Activated CD4-positive, alpha-beta T cell treated with anti-CD3 and anti-CD28 coated beads for 36 hours (primary cell): ENCODE measurements at regions of chr4 and their contacts with region 1.

Region 1: DNA sequence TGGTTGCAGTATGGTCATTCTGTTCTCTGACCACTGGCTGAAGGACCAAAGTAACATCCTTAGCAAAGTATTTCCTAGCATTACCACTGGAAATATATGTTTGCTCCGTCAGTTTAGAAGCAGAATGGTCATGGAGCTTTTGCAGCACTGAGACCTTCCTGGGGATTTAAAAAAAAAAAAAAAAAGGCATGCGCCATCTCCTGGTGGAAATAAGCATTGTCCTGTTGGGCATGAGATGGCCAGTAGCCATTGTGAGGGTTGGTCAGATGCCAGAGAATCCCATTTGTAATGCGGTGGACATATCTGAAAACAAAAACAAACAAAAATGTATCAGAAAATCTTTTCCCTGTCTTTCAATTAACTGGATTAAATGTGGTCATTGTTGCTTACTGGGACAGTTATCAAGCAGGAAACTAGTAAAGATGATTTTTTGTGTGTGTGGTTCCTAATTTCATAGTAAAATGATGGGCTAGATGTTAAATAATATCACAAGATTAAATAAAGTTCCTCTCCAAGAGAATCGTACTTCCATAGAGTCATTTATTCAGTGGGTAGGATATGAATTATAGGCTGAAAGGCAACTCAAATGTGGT is 139.6 kb downstream of the SOWAHB start:
- DNase-seq: no peak
- ATAC-seq: no peak
- H3K4me3 Mint-ChIP-seq: no peak overlapping the region
- H3K27ac Mint-ChIP-seq: no peak overlapping the region
- H3K4me1 Mint-ChIP-seq: peaks cover 14% of the 10 kb centered on the region
- H3K27me3 Mint-ChIP-seq: peaks cover 11% of the 10 kb centered on the region

Region 2: DNA sequence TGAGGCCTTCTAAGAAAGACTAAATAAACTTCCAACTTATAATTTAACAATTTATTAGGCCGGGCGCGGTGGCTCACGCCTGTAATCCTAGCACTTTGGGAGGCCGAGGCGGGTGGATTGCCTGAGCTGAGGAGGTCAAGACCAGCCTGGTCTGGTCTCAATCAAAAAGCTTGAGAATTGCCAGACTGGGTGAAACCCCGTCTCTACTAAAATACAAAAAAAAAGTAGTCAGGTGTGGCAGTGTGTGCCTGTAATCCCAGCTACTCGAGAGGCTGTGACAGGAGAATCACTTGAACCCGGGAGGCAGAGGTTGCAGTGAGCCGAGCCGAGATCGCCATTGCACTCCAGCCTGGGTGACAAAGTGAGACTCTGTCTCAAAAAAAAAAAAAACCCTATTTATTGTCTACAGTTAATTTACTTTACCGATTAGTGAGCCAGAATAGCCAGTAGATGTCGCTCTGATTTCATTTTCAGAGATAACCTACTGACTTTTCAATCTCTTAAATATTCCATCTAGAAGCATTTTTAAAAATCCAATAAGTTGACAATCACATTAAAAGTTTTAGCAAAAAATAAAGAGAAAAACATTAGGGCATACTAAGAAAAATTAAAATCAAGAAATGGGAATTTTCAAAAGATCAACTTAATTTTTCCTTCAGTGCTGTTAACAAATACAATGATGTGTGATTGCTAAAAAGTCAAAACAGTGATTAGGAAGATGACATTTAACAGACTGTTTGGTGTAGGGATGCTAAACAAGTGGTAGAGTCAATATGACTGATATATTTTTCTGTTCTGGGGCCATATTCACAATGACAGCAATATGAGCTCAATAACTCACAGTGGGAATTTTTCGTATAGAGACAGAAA is 327.6 kb before region 1 on chr4:
- CTCF ChIA-PET with region 1: interaction called, 3 read pairs
- POLR2A ChIA-PET with region 1: no interaction called
- intact Hi-C with region 1: loop called (anchors 5 to 10 kb)
- DNase-seq: peak; percentile 6
- ATAC-seq: peak; percentile 49
- H3K4me3 Mint-ChIP-seq: no peak overlapping the region
- H3K27ac Mint-ChIP-seq: no peak overlapping the region
- H3K4me1 Mint-ChIP-seq: no peaks in the 10 kb centered on the region
- H3K27me3 Mint-ChIP-seq: peaks cover 20% of the 10 kb centered on the region

Region 3: DNA sequence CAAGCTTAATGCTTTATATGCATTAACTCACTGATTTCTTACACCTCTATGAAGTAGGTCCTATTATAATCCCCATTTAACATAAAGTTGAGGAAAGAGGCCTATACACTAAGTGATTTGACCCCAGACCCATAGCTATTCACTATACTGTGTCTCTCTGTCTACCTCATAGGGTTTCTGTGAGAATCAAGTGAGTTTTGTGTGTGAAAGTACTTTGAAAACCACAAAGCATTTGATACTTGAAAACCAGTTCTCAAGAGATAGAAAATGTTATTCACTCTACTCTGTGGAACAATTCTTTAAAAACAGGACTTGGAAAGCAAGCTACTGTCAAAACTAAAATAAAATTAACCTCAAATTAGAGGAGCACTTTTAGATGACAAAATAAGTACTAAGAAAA is 288.3 kb before region 1 on chr4:
- CTCF ChIA-PET with region 1: no interaction called
- POLR2A ChIA-PET with region 1: no interaction called
- intact Hi-C with region 1: no loop called
- DNase-seq: no peak
- ATAC-seq: no peak
- H3K4me3 Mint-ChIP-seq: no peak overlapping the region
- H3K27ac Mint-ChIP-seq: no peak overlapping the region
- H3K4me1 Mint-ChIP-seq: no peaks in the 10 kb centered on the region
- H3K27me3 Mint-ChIP-seq: no peaks in the 10 kb centered on the region

Region 4: DNA sequence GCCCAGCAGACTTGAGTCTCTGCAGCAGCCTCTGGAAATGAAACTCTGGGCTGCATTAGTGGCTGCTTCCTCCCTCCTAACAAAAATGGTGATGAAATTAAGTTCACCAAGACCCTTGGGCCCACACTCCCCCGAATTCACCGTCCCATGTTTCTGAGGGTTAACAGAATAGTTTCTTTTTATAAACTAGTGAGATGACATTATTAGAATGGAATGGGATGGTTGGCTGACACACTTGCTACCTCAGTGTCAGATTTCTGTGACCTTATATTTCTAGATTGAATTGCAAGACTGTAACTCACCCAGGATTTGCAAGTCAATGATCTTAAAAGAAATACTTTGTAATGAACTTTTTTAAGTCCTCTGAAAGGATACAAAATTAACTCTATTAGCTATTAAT is 196.2 kb before region 1 on chr4:
- CTCF ChIA-PET with region 1: no interaction called
- POLR2A ChIA-PET with region 1: no interaction called
- intact Hi-C with region 1: no loop called
- DNase-seq: no peak
- ATAC-seq: no peak
- H3K4me3 Mint-ChIP-seq: no peak overlapping the region
- H3K27ac Mint-ChIP-seq: no peak overlapping the region
- H3K4me1 Mint-ChIP-seq: peaks cover 11% of the 10 kb centered on the region
- H3K27me3 Mint-ChIP-seq: no peaks in the 10 kb centered on the region

Region 5: DNA sequence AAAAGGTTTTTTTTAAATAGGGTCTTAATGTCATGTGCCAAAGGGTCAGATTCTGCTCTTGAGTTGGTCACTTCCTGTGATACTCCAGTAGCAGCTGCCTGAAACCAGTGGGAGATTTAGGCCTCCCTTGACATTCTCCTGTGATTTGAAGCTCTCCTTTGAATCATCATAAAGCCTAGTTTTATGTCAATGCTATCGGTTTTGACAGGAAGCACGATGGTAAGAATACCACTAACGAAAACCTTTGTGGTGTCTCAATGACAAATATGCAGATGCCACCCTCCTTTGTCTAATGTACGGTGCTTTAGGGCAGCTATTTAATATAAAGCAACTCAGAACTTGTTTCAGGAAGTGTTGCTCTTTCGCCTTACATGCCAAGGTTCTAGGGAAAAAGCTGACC is 273.2 kb after region 1 on chr4:
- CTCF ChIA-PET with region 1: no interaction called
- POLR2A ChIA-PET with region 1: no interaction called
- intact Hi-C with region 1: loop called (anchors 5 kb)
- DNase-seq: peak; percentile 24
- ATAC-seq: peak; percentile 78
- H3K4me3 Mint-ChIP-seq: no peak overlapping the region
- H3K27ac Mint-ChIP-seq: no peak overlapping the region
- H3K4me1 Mint-ChIP-seq: peaks cover 44% of the 10 kb centered on the region
- H3K27me3 Mint-ChIP-seq: peaks cover 13% of the 10 kb centered on the region